ENCODE measurements at regions of chr1 and their contacts with region 1.

Region 1: DNA sequence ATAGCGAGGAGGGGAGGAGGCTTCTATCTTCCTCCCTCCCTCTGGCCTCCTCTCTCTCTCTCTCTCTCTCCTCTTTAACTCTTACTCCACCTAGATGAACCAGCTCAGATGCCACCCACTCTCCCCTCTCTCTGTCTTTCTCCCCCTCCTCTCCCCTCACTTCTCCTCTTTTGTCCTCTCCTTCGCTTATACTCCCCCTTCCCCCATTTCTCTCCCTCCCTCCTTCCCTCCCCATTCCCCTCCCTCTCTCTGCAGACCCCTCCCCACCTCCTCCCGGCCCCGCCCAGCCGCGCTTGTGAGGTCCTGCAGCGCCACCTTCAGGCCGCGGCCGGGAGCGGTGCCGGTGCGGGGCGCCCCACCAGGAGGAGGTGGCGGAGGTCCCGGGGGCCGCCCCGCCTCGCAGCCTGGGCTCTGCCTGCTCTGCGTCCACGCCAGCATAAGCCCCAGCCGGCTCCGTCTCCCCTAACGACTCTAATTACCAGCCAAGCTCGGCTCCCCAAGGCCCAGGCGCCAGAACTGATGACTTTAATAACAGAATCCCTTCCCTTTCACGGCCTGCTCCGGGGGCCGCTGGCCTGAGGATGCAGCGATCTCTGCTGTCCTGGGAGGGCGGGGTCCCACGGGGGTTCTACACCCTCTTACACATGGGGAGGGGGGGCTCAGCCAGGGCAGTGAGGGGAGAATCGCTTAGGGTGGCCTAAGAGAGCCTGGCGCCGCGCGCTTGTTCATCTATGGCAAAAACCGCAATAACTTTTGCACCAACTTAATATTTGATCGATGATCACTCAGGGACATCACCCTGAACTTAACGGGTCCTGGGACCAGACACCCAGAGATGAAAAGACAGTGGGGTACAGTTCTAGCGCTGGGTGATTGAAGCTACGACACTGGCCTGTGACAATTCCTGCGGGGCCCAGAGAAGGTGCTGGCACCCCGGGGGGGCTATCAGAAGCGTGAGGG is 637.3 kb downstream of the MATN1 start:
- DNase-seq: no peak
- ATAC-seq: peak; percentile 81
- H3K4me3 ChIP-seq: peak overlapping the region in 1 of 2 experiments; percentile 29; a peak in 1 of 4 replicates
- H3K27ac ChIP-seq: no peak overlapping the region
- H3K4me1 ChIP-seq: peaks cover 19% of the 10 kb centered on the region
- H3K27me3 ChIP-seq: no peaks in the 10 kb centered on the region
- CTCF ChIP-seq: peak; percentile 94

Region 2: GRCh38 chr1:29379443-29380073 is 706.5 kb before region 1 on chr1:
- CTCF ChIA-PET with region 1: no interaction called
- POLR2A ChIA-PET with region 1: no interaction called
- in situ Hi-C with region 1: no loop called
- intact Hi-C with region 1: loop called (anchors 10 kb)
- DNase-seq: peak; percentile 15
- ATAC-seq: no peak
- H3K4me3 ChIP-seq: no peak overlapping the region
- H3K27ac ChIP-seq: no peak overlapping the region
- H3K4me1 ChIP-seq: no peaks in the 10 kb centered on the region
- H3K27me3 ChIP-seq: peaks cover 7% of the 10 kb centered on the region
- CTCF ChIP-seq: peak; percentile 83

Region 3: GRCh38 chr1:29695036-29695435 is 391.1 kb before region 1 on chr1:
- CTCF ChIA-PET with region 1: no interaction called
- POLR2A ChIA-PET with region 1: interaction called, 13 read pairs
- in situ Hi-C with region 1: no loop called
- intact Hi-C with region 1: no loop called
- DNase-seq: no peak
- ATAC-seq: no peak
- H3K4me3 ChIP-seq: no peak overlapping the region
- H3K27ac ChIP-seq: no peak overlapping the region
- H3K4me1 ChIP-seq: no peaks in the 10 kb centered on the region
- H3K27me3 ChIP-seq: peaks cover 3% of the 10 kb centered on the region
- CTCF ChIP-seq: no peak

Region 4: GRCh38 chr1:29798699-29799566 is 287.2 kb before region 1 on chr1:
- CTCF ChIA-PET with region 1: no interaction called
- POLR2A ChIA-PET with region 1: no interaction called
- in situ Hi-C with region 1: no loop called
- intact Hi-C with region 1: loop called (anchors 5 kb)
- DNase-seq: no peak
- ATAC-seq: no peak
- H3K4me3 ChIP-seq: no peak overlapping the region
- H3K27ac ChIP-seq: no peak overlapping the region
- H3K4me1 ChIP-seq: no peaks in the 10 kb centered on the region
- H3K27me3 ChIP-seq: no peaks in the 10 kb centered on the region
- CTCF ChIP-seq: no peak

Region 5: GRCh38 chr1:29909962-29910361 is 176.1 kb before region 1 on chr1:
- CTCF ChIA-PET with region 1: no interaction called
- POLR2A ChIA-PET with region 1: no interaction called
- in situ Hi-C with region 1: no loop called
- intact Hi-C with region 1: loop called (anchors 5 kb)
- DNase-seq: no peak
- ATAC-seq: no peak
- H3K4me3 ChIP-seq: no peak overlapping the region
- H3K27ac ChIP-seq: no peak overlapping the region
- H3K4me1 ChIP-seq: no peaks in the 10 kb centered on the region
- H3K27me3 ChIP-seq: no peaks in the 10 kb centered on the region
- CTCF ChIP-seq: no peak

Region 6: DNA sequence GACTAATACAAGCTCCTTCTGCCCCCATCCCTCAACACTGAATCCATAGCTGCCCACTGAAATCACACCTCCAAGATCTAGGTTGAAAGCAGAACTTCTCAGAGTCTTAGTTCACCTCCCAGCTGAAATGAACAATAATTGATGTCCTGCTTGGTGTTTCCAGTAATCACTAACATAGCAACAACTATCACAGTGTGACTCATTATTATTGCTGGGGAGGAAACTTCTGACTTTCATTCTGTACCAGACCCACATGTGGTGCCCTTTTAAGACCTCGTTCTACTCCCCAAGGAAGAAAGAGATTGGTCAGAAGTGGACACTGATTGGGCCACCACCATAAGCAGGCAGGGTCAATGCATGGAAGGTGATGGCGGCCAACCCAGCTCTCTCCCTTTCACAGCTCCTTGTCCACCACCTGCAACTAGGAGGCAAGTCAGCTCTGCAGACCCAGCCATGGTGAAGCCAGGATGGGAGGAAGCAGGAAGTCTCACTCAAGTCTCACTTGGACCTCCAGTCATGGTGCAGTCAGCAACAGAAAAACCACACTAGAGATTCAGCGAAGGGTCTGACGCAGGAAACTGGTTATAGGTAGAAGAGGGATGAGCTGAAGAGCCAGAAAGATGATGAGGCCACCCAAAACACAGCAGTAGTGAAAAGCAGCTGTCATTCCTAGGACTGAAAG is 129.6 kb before region 1 on chr1:
- CTCF ChIA-PET with region 1: no interaction called
- POLR2A ChIA-PET with region 1: no interaction called
- in situ Hi-C with region 1: no loop called
- intact Hi-C with region 1: loop called (anchors 10 kb)
- DNase-seq: no peak
- ATAC-seq: no peak
- H3K4me3 ChIP-seq: no peak overlapping the region
- H3K27ac ChIP-seq: no peak overlapping the region
- H3K4me1 ChIP-seq: no peaks in the 10 kb centered on the region
- H3K27me3 ChIP-seq: no peaks in the 10 kb centered on the region
- CTCF ChIP-seq: no peak

Region 7: DNA sequence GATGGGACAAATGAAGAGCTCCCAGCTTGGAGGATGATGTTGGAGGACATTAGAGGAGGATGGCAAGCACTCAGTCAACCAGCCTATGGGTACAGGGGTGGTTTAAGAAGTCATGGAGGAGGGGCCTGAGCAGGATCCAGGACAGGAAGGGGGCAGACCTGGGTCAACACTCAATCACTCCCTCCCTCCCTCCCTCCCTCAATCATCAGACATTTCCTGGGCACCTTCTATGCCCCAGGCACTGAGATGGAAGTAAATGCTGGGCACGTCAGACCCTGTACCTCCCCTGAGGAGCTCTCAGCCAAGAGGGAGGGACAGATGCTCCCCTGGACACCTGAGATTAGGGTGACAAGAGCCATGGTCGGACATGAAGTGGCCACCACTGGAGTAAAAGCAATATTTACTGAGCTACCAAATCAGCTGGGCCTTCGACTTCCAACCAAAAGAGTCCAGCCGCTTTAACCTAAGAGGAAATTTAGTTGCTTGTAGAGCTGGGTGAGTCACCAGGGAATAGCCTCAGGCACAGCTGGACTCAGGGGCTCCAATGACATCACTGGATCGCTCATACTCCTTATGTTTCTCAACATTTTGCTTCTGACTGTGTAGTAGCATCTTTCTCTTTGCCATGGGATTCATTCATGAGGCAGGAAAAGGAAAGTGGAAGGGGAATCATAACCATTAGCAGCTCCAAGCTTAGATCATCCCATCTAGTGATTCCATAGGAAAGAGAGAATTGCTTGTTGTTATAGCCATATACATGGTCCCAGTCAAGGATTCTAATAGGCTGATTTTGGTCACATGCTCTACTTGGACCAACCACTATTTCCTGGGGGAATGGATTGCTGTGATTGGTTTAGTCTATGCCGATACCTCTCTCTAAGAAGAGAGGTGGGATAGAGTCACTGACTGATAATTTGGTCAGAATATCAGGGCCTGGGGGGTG is 27.2 kb before region 1 on chr1:
- CTCF ChIA-PET with region 1: no interaction called
- POLR2A ChIA-PET with region 1: no interaction called
- in situ Hi-C with region 1: no loop called
- intact Hi-C with region 1: no loop called
- DNase-seq: peak; percentile 5
- ATAC-seq: no peak; the same call in 1 of the 2 replicates
- H3K4me3 ChIP-seq: no peak overlapping the region
- H3K27ac ChIP-seq: no peak overlapping the region
- H3K4me1 ChIP-seq: no peaks in the 10 kb centered on the region
- H3K27me3 ChIP-seq: peaks cover 6% of the 10 kb centered on the region
- CTCF ChIP-seq: no peak

Region 8: GRCh38 chr1:30126848-30127247 is 40.8 kb after region 1 on chr1:
- CTCF ChIA-PET with region 1: no interaction called
- POLR2A ChIA-PET with region 1: no interaction called
- in situ Hi-C with region 1: no loop called
- intact Hi-C with region 1: no loop called
- DNase-seq: no peak
- ATAC-seq: no peak
- H3K4me3 ChIP-seq: no peak overlapping the region
- H3K27ac ChIP-seq: no peak overlapping the region
- H3K4me1 ChIP-seq: no peaks in the 10 kb centered on the region
- H3K27me3 ChIP-seq: no peaks in the 10 kb centered on the region; the same call in 1 of the 2 replicates
- CTCF ChIP-seq: no peak

Region 9: GRCh38 chr1:31771891-31772668 is 1686.0 kb after region 1 on chr1:
- CTCF ChIA-PET with region 1: no interaction called
- POLR2A ChIA-PET with region 1: no interaction called
- in situ Hi-C with region 1: no loop called
- intact Hi-C with region 1: no loop called
- DNase-seq: no peak
- ATAC-seq: no peak
- H3K4me3 ChIP-seq: no peak overlapping the region
- H3K27ac ChIP-seq: no peak overlapping the region
- H3K4me1 ChIP-seq: peaks cover 32% of the 10 kb centered on the region
- H3K27me3 ChIP-seq: peaks cover 2% of the 10 kb centered on the region; the same call in 1 of the 2 replicates
- CTCF ChIP-seq: no peak